ENCODE measurements at regions of chr12 and their contacts with region 1.

Region 1: GRCh38 chr12:53441040-53441833 is at the start of gene PRR13:
- DNase-seq: peak; percentile 95 to 100 (median 97)
- H3K4me3 ChIP-seq: peak within 1 kb of the TSS; percentile 75 to 91
- H3K4me3 Mint-ChIP-seq: peak within 1 kb of the TSS; percentile 95 to 99 (median 97)
- H3K27ac ChIP-seq: peak within 1 kb of the TSS; percentile 98
- H3K27ac Mint-ChIP-seq: peak within 1 kb of the TSS; percentile 91 to 99 (median 96)
- H3K4me1 ChIP-seq: peaks cover 40% of the 10 kb centered on the region
- H3K4me1 Mint-ChIP-seq: peaks cover 22 to 59% (median 40%) of the 10 kb centered on the region in 4 donors
- H3K27me3 ChIP-seq: no peaks in the 10 kb centered on the region
- H3K27me3 Mint-ChIP-seq: no peaks in the 10 kb centered on the region
- total RNA-seq, gene PRR13: 242 to 247 TPM

Region 2: DNA sequence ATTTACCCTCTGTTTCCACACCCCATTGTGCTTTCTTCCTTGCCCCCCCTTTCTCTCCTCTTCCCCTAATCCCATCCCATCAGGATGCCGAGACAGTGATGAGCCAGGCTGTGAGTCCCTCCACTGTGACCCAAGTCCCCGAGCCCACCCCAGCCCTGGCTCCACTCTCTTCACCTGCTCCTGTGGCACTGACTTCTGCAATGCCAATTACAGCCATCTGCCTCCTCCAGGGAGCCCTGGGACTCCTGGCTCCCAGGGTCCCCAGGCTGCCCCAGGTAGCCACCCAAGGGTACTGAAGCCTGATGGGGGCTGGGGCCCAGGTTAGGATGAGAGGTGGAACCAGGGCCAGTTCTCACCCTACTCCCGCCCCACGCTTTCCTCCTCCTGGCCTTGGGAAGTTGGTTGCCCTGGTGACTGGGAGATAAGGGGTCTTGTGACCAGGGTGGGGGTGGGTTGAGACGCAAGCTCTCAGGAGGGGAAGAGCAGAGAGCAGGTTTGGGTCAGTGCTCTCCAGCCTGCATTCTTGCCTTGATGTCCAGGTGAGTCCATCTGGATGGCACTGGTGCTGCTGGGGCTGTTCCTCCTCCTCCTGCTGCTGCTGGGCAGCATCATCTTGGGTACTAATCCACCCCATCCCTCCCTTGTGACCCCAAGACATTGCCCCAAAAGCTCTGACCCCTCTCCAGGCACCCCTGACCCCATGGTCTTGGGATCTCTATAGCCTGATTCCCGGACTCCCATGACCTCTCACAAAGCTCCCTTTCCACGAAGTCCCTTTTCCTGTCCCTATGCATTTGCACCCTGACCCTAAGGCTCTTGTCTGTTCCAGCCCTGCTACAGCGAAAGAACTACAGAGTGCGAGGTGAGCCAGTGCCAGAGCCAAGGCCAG is 16.4 kb before region 1 on chr12:
- CTCF ChIA-PET with region 1: interaction called, 3 read pairs
- POLR2A ChIA-PET with region 1: interaction called, 3 read pairs
- intact Hi-C with region 1: loop called (anchors 1 kb)
- DNase-seq: no peak
- H3K4me3 ChIP-seq: no peak overlapping the region
- H3K4me3 Mint-ChIP-seq: no peak overlapping the region
- H3K27ac ChIP-seq: no peak overlapping the region
- H3K27ac Mint-ChIP-seq: no peak overlapping the region
- H3K4me1 ChIP-seq: peaks cover 5% of the 10 kb centered on the region
- H3K4me1 Mint-ChIP-seq: peaks cover 5 to 9% (median 6%) of the 10 kb centered on the region in 4 donors
- H3K27me3 ChIP-seq: no peaks in the 10 kb centered on the region
- H3K27me3 Mint-ChIP-seq: no peaks in the 10 kb centered on the region

Region 3: GRCh38 chr12:53451661-53452158 is 10.5 kb after region 1 on chr12 and contains the start of gene PCBP2:
- CTCF ChIA-PET with region 1: interaction called, 3 read pairs
- POLR2A ChIA-PET with region 1: interaction called, 16 read pairs
- intact Hi-C with region 1: loop called (anchors 1 kb)
- DNase-seq: peak; percentile 97 to 99 (median 98)
- H3K4me3 ChIP-seq: peak within 1 kb of the TSS; percentile 58 to 61
- H3K4me3 Mint-ChIP-seq: peak within 1 kb of the TSS; percentile 95 to 100 (median 98)
- H3K27ac ChIP-seq: peak within 1 kb of the TSS; percentile 95
- H3K27ac Mint-ChIP-seq: peak within 1 kb of the TSS; percentile 98 to 100 (median 99)
- H3K4me1 ChIP-seq: peaks cover 34% of the 10 kb centered on the region
- H3K4me1 Mint-ChIP-seq: peaks cover 20 to 49% (median 31%) of the 10 kb centered on the region in 4 donors
- H3K27me3 ChIP-seq: no peaks in the 10 kb centered on the region
- H3K27me3 Mint-ChIP-seq: no peaks in the 10 kb centered on the region
- total RNA-seq, gene PCBP2: 848 to 858 TPM

Region 4: DNA sequence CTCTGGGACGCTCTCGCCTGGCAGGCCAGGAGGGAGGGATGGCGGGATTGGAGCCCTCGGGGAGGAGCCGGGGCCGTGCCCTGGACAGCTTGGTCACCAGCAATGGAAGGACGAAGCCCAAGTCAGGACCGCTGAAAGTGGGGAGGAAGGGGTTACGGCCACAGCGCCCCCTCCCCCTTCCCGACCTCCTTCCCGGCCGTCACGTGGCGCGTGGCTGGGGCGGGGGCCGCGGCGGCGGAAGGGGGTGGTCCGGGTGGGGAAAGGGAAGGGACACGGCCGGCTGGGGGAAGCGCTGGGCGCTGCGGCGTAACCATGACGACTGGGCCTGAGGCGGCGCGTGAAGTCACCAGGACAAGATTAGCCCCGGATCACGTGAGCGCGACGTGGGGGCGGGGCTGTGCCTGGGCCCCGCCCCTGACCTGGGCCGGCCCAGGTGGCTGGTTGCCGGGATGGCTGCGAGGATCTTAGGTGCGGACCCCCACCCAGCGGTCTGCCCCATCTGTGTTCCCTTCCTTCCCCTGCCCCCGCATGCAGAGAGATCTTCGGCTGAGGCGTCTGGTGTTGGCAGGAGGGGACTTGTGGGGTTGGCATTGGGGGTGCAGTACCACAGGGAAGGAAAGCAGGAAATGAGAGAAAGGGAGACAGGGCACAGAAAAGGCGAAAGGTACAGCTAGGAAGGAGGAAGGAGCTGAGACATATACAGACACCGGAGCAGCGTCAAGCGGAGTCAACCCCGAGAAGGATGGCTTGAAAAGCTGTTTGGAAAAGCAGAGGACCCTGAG is 51.8 kb after region 1 on chr12:
- CTCF ChIA-PET with region 1: no interaction called
- POLR2A ChIA-PET with region 1: interaction called, 54 read pairs
- intact Hi-C with region 1: loop called (anchors 1 kb)
- DNase-seq: peak; percentile 82 to 91 (median 83)
- H3K4me3 ChIP-seq: peak overlapping the region; percentile 45 to 93
- H3K4me3 Mint-ChIP-seq: peak overlapping the region; percentile 88 to 98 (median 90)
- H3K27ac ChIP-seq: peak overlapping the region; percentile 75
- H3K27ac Mint-ChIP-seq: peak overlapping the region; percentile 86 to 99 (median 96)
- H3K4me1 ChIP-seq: peaks cover 26% of the 10 kb centered on the region
- H3K4me1 Mint-ChIP-seq: peaks cover 15 to 56% (median 39%) of the 10 kb centered on the region in 4 donors
- H3K27me3 ChIP-seq: no peaks in the 10 kb centered on the region
- H3K27me3 Mint-ChIP-seq: no peaks in the 10 kb centered on the region

Measured in CD4-positive, alpha-beta memory T cell (primary cell).